ENCODE measurements at regions of chr12 and their contacts with region 1.

Region 1: DNA sequence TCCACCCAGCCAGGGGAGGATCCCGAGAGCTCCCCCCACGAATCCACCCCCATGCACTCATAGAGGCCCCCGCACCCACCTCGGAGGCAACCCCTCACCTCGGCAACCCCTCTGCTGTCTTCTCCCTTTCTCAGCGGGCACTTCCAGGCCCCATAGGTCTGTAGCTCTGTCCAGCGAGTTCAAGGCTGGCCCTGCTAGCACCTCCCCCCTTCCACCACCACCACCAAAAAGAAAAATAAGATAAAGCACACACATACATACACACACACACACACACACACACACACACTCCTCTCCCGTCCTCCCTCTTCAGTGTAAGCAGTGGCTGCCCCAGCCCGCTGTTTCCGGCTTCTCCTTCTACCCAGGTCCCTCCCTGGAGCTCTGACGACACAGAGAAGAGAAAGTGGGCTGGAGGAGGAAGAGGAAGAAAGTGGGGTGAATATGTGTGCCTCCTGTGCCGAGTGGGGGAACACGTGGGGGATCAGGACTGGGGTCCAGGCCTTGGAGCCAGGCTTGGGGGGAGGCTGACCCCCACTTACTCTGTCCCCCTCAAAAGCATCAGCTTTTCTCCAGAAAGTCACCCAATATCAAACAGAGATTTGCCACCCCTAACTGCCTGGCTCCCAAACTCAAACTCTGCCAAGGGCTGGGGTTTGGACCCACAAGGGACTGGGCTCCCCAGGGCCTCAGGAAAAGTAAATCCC is at the start of gene STAT6:
- DNase-seq: peak; percentile 69 to 96 (median 80)
- ATAC-seq: peak; percentile 64
- H3K4me3 ChIP-seq: peak within 1 kb of the TSS; percentile 95
- H3K4me3 Mint-ChIP-seq: peak within 1 kb of the TSS; percentile 96
- H3K27ac ChIP-seq: peak within 1 kb of the TSS; percentile 100
- H3K27ac Mint-ChIP-seq: peak within 1 kb of the TSS; percentile 94
- H3K4me1 ChIP-seq: peaks cover 57% of the 10 kb centered on the region
- H3K4me1 Mint-ChIP-seq: peaks cover 53% of the 10 kb centered on the region
- H3K27me3 ChIP-seq: no peaks in the 10 kb centered on the region
- H3K27me3 Mint-ChIP-seq: peaks cover 4% of the 10 kb centered on the region
- CTCF ChIP-seq: no peak
- total RNA-seq, gene STAT6: 133 to 144 TPM

Region 2: GRCh38 chr12:56630160-56630632 is 481.0 kb before region 1 on chr12 and contains the start of gene BAZ2A:
- CTCF ChIA-PET with region 1: no interaction called
- POLR2A ChIA-PET with region 1: interaction called, 15 read pairs
- intact Hi-C with region 1: no loop called
- DNase-seq: peak; percentile 71 to 93 (median 81)
- ATAC-seq: peak; percentile 72
- H3K4me3 ChIP-seq: peak within 1 kb of the TSS; percentile 100
- H3K4me3 Mint-ChIP-seq: peak within 1 kb of the TSS; percentile 93
- H3K27ac ChIP-seq: peak within 1 kb of the TSS; percentile 88 to 96
- H3K27ac Mint-ChIP-seq: peak within 1 kb of the TSS; percentile 94
- H3K4me1 ChIP-seq: peaks cover 65% of the 10 kb centered on the region
- H3K4me1 Mint-ChIP-seq: peaks cover 78% of the 10 kb centered on the region
- H3K27me3 ChIP-seq: no peaks in the 10 kb centered on the region
- H3K27me3 Mint-ChIP-seq: no peaks in the 10 kb centered on the region
- CTCF ChIP-seq: no peak
- total RNA-seq, gene BAZ2A: 207 to 211 TPM

Region 3: DNA sequence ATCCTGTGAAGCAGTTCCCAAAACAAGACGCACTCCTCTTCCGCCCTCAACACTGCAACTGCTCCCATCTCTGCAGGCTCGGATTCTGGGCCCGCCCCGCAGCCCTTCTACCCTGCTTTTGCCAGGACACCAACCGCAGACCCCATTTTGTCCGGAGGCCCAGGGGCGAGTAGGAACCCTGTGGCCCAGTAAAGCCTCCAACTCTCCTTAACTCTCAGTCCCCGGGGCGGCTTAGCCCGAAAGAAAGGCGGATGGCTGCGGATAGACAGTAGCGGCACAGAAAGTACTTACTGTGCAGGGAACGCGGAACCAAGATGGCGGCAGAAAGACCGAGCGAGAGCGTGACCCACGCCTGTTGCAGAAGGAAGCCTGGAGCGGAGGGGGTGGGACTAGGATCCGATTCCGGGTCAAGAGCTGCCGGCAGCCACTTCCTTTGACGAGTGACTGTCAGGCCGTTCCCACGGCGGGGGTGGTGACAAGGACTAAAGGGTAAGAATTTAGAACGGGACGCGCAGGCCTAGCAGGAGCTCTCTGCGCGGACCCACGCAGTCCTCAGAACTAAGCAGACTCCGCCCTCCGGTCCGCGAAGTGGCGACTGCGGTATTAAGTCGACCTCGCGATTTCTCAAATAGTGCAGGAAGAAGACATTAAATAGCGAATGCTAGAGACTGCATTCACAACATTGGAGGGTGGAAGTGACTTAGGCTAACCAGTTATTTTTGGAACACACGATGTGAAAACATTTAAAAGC is 386.0 kb before region 1 on chr12 and contains the start of gene NACA:
- CTCF ChIA-PET with region 1: no interaction called
- POLR2A ChIA-PET with region 1: interaction called, 20 read pairs
- intact Hi-C with region 1: no loop called
- DNase-seq: peak; percentile 94 to 99 (median 96)
- ATAC-seq: peak; percentile 93
- H3K4me3 ChIP-seq: peak within 1 kb of the TSS; percentile 97
- H3K4me3 Mint-ChIP-seq: peak within 1 kb of the TSS; percentile 98
- H3K27ac ChIP-seq: peak within 1 kb of the TSS; percentile 86 to 91
- H3K27ac Mint-ChIP-seq: peak within 1 kb of the TSS; percentile 92
- H3K4me1 ChIP-seq: peaks cover 49% of the 10 kb centered on the region
- H3K4me1 Mint-ChIP-seq: peaks cover 60% of the 10 kb centered on the region
- H3K27me3 ChIP-seq: no peaks in the 10 kb centered on the region
- H3K27me3 Mint-ChIP-seq: no peaks in the 10 kb centered on the region
- CTCF ChIP-seq: no peak
- total RNA-seq, gene NACA: 1,441 to 1,479 TPM

Region 4: GRCh38 chr12:57019983-57020719 is 91.0 kb before region 1 on chr12:
- CTCF ChIA-PET with region 1: no interaction called
- POLR2A ChIA-PET with region 1: interaction called, 14 read pairs
- intact Hi-C with region 1: no loop called
- DNase-seq: no peak
- ATAC-seq: peak; percentile 44
- H3K4me3 ChIP-seq: no peak overlapping the region
- H3K4me3 Mint-ChIP-seq: peak overlapping the region; percentile 42
- H3K27ac ChIP-seq: peak overlapping the region in 1 of 2 donors; percentile 33
- H3K27ac Mint-ChIP-seq: peak overlapping the region; percentile 80
- H3K4me1 ChIP-seq: peaks cover 14% of the 10 kb centered on the region
- H3K4me1 Mint-ChIP-seq: peaks cover 47% of the 10 kb centered on the region
- H3K27me3 ChIP-seq: no peaks in the 10 kb centered on the region
- H3K27me3 Mint-ChIP-seq: no peaks in the 10 kb centered on the region
- CTCF ChIP-seq: no peak

Region 5: DNA sequence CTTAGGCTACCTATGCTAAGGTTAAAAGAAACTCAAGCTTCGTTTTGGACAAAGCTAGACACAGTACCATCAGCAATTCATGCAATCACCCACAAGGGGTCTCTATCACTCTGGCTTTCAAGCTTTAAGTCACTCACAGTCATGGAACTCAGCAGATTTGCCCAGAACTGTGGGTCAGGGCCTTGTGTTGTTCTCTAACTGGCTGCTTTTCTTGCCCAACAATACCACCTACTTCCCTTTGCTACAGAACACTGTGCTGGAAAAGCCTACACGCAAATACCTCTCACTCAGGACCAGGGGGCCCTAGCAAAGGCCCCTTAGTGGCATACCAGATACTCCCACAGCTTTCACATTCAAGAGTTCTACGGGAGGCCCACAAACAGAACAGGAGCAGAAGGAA is 41.7 kb before region 1 on chr12:
- CTCF ChIA-PET with region 1: interaction called, 141 read pairs
- POLR2A ChIA-PET with region 1: interaction called, 244 read pairs
- intact Hi-C with region 1: loop called (anchors 1 kb)
- DNase-seq: peak in 13 of 14 experiments; percentile 20 to 89 (median 51)
- ATAC-seq: peak; percentile 99
- H3K4me3 ChIP-seq: no peak overlapping the region
- H3K4me3 Mint-ChIP-seq: peak overlapping the region; percentile 18
- H3K27ac ChIP-seq: peak overlapping the region; percentile 34 to 38
- H3K27ac Mint-ChIP-seq: peak overlapping the region; percentile 81
- H3K4me1 ChIP-seq: peaks cover 9% of the 10 kb centered on the region
- H3K4me1 Mint-ChIP-seq: peaks cover 31% of the 10 kb centered on the region
- H3K27me3 ChIP-seq: no peaks in the 10 kb centered on the region
- H3K27me3 Mint-ChIP-seq: no peaks in the 10 kb centered on the region
- CTCF ChIP-seq: peak; percentile 87

Region 6: GRCh38 chr12:57124259-57124877 is 13.2 kb after region 1 on chr12:
- CTCF ChIA-PET with region 1: interaction called, 30 read pairs
- POLR2A ChIA-PET with region 1: interaction called, 37 read pairs
- intact Hi-C with region 1: no loop called
- DNase-seq: peak; percentile 56 to 89 (median 70)
- ATAC-seq: peak; percentile 73
- H3K4me3 ChIP-seq: no peak overlapping the region
- H3K4me3 Mint-ChIP-seq: peak overlapping the region; percentile 4
- H3K27ac ChIP-seq: no peak overlapping the region
- H3K27ac Mint-ChIP-seq: no peak overlapping the region
- H3K4me1 ChIP-seq: peaks cover 28% of the 10 kb centered on the region
- H3K4me1 Mint-ChIP-seq: peaks cover 13% of the 10 kb centered on the region
- H3K27me3 ChIP-seq: no peaks in the 10 kb centered on the region
- H3K27me3 Mint-ChIP-seq: no peaks in the 10 kb centered on the region
- CTCF ChIP-seq: peak; percentile 98